Uterus (tissue), 4 donors: ENCODE measurements at regions of chr21 and their contacts with region 1.

Region 1: GRCh38 chr21:45981151-45982089 is at the start of gene COL6A1:
- DNase-seq: peak; percentile 87 to 90
- H3K4me3 ChIP-seq: peak within 1 kb of the TSS; percentile 71 to 92
- H3K27ac ChIP-seq: peak within 1 kb of the TSS; percentile 96 to 98
- H3K4me1 ChIP-seq: peaks cover 0 to 20% of the 10 kb centered on the region in 2 donors
- H3K27me3 ChIP-seq: no peaks in the 10 kb centered on the region
- CTCF ChIP-seq: peak in 1 of 4 experiments; percentile 27
- POLR2A ChIP-seq: peak; percentile 78 to 89
- total RNA-seq, gene COL6A1: 621 to 1,160 (median 804) TPM

Region 2: GRCh38 chr21:45724345-45724961 is 257.0 kb before region 1 on chr21:
- intact Hi-C with region 1: no loop called
- DNase-seq: no peak
- H3K4me3 ChIP-seq: no peak overlapping the region
- H3K27ac ChIP-seq: no peak overlapping the region
- H3K4me1 ChIP-seq: no peaks in the 10 kb centered on the region
- H3K27me3 ChIP-seq: no peaks in the 10 kb centered on the region
- CTCF ChIP-seq: no peak
- POLR2A ChIP-seq: no peak

Region 3: GRCh38 chr21:45910543-45911221 is 70.7 kb before region 1 on chr21:
- intact Hi-C with region 1: no loop called
- DNase-seq: no peak
- H3K4me3 ChIP-seq: no peak overlapping the region
- H3K27ac ChIP-seq: no peak overlapping the region
- H3K4me1 ChIP-seq: no peaks in the 10 kb centered on the region
- H3K27me3 ChIP-seq: no peaks in the 10 kb centered on the region
- CTCF ChIP-seq: no peak
- POLR2A ChIP-seq: no peak

Region 4: GRCh38 chr21:45923146-45923545 is 58.3 kb before region 1 on chr21:
- intact Hi-C with region 1: no loop called
- DNase-seq: peak; percentile 73 to 81
- H3K4me3 ChIP-seq: no peak overlapping the region
- H3K27ac ChIP-seq: no peak overlapping the region
- H3K4me1 ChIP-seq: no peaks in the 10 kb centered on the region
- H3K27me3 ChIP-seq: no peaks in the 10 kb centered on the region
- CTCF ChIP-seq: peak; percentile 84 to 92 (median 88)
- POLR2A ChIP-seq: peak in 1 of 2 donors; percentile 16

Region 5: GRCh38 chr21:46052703-46053651 is 71.6 kb after region 1 on chr21:
- intact Hi-C with region 1: loop called (anchors 5 kb)
- DNase-seq: peak in 1 of 2 donors; percentile 46
- H3K4me3 ChIP-seq: no peak overlapping the region
- H3K27ac ChIP-seq: peak overlapping the region; percentile 98 to 99
- H3K4me1 ChIP-seq: peaks cover 17 to 40% of the 10 kb centered on the region in 2 donors
- H3K27me3 ChIP-seq: no peaks in the 10 kb centered on the region
- CTCF ChIP-seq: no peak
- POLR2A ChIP-seq: peak in 1 of 2 donors; percentile 16